AG04450 (cell line): ENCODE measurements at regions of chr15 and their contacts with region 1.

Region 1: DNA sequence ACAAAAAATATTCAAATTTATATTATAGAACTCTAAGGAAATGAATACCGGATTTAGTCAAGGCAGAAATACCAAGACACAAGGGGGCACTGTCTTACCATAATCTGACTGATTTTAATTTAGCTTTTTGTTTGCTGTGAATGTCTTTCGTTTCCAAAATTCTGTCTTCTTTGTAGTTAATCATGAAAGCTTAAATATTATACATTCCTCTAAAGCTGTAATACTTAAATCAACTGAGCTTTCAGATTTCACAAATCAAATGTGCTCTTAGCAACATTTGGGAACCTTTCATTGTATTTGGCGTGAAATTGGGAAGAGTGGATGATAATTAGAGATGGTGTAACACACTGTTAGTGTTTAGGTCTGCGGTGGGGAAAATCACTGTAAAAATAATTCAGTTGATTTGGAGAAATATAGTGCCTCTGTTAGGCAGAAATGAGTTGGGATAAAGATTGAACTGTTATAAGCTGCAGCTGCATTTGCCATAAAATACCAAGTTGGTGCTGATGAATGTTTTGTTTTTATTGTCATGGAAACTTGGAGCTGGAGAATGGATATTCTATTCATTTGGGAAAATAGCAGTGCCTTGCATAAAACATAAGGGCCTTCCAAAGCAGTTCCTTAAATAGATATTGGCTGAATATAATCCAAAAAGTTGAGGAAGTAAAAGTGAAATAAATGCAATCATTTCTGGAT is 228.2 kb downstream of the TCF12 start:
- DNase-seq: no peak
- H3K4me3 ChIP-seq: peak overlapping the region; percentile 26
- H3K27ac ChIP-seq: no peak overlapping the region
- H3K27me3 ChIP-seq: no peaks in the 10 kb centered on the region
- CTCF ChIP-seq: peak; percentile 70

Region 2: DNA sequence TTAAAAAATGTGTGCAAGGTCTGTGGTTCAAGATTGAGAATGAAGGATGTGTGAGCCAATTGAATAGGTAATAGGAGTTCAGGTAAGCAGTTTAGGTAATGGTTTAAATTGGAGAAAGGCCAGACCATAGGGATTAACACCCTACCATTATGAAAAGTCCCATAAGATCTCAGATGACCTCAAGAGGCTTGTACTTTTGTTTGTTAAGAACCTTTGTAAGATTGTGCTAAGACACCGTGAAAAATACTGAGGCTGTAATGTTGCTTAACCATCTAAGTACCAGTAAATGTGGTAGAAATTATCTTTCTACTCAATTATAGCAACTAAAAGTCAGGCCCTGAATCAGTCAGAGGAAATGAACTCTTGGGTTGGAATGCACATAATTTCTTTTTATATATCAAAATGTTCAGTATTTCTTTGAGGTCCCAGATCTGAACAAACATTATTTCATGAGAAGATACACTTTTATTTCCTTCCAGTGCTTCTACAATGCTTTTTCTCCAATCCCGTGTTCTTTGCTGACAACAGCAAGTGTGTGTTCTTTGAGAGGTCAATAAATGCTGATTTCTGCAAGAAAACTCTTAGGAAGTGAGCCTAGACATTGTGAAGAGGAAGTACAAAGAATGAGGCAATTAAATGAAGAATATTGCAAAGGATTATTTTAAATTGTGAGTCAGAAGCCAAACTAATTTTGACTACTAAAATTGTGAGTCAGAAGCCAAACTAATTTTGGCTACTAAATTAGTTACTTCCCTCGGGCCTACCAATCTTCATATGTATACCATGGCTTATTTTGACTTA is 161.8 kb before region 1 on chr15:
- CTCF ChIA-PET with region 1: no interaction called
- POLR2A ChIA-PET with region 1: no interaction called
- DNase-seq: no peak
- H3K4me3 ChIP-seq: no peak overlapping the region
- H3K27ac ChIP-seq: no peak overlapping the region
- H3K27me3 ChIP-seq: no peaks in the 10 kb centered on the region
- CTCF ChIP-seq: no peak

Region 3: GRCh38 chr15:57041416-57041815 is 105.2 kb before region 1 on chr15:
- CTCF ChIA-PET with region 1: no interaction called
- POLR2A ChIA-PET with region 1: no interaction called
- DNase-seq: no peak
- H3K4me3 ChIP-seq: no peak overlapping the region
- H3K27ac ChIP-seq: no peak overlapping the region
- H3K27me3 ChIP-seq: no peaks in the 10 kb centered on the region
- CTCF ChIP-seq: no peak

Region 4: GRCh38 chr15:57102858-57103257 is 43.8 kb before region 1 on chr15:
- CTCF ChIA-PET with region 1: no interaction called
- POLR2A ChIA-PET with region 1: no interaction called
- DNase-seq: no peak
- H3K4me3 ChIP-seq: no peak overlapping the region
- H3K27ac ChIP-seq: no peak overlapping the region
- H3K27me3 ChIP-seq: no peaks in the 10 kb centered on the region
- CTCF ChIP-seq: no peak

Region 5: GRCh38 chr15:57213862-57214261 is 67.2 kb after region 1 on chr15:
- CTCF ChIA-PET with region 1: interaction called, 87 read pairs
- POLR2A ChIA-PET with region 1: no interaction called
- DNase-seq: no peak
- H3K4me3 ChIP-seq: no peak overlapping the region
- H3K27ac ChIP-seq: no peak overlapping the region
- H3K27me3 ChIP-seq: no peaks in the 10 kb centered on the region
- CTCF ChIP-seq: peak; percentile 56

Region 6: DNA sequence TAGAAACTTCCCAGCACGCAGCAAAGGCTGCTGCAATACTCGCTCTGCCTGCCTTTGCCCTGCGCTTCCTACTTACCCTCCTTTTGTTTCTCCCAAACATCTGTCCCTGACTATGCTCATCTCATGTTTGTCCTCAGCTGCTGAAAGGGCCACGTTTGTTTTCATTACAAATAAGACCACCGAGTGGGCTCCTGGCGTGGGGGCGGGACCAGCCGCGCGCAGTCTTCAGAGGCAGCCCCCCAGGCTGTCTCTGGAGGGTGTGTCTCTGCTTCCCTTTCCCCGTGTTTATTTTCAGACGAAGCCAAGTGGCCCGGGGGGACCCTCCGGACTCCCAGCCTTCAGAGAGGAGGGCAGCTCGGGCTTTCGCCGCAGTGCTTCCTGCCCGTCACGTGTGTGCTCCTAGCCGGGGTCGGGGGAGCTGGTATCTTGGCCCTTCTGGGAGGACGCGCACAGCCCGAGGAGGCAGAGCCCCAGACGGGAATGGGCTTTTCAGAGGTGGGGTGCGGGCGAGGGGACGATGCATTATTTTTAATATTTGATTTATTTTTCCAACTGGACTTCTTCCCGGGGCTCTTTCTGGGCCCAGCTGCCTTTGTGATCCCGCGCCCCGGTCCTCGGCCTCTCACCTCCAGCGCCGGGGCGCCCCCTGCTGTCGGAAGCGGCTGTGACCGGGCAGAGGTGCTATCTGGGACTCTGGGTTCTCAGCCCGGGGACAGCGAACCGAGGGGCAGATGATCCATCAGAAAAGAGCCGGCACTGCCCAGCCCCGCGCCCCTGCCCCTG is 159.7 kb after region 1 on chr15:
- CTCF ChIA-PET with region 1: interaction called, 76 read pairs
- POLR2A ChIA-PET with region 1: interaction called, 3 read pairs
- DNase-seq: no peak
- H3K4me3 ChIP-seq: peak overlapping the region; percentile 47
- H3K27ac ChIP-seq: peak overlapping the region; percentile 21
- H3K27me3 ChIP-seq: no peaks in the 10 kb centered on the region
- CTCF ChIP-seq: peak; percentile 79

Region 7: DNA sequence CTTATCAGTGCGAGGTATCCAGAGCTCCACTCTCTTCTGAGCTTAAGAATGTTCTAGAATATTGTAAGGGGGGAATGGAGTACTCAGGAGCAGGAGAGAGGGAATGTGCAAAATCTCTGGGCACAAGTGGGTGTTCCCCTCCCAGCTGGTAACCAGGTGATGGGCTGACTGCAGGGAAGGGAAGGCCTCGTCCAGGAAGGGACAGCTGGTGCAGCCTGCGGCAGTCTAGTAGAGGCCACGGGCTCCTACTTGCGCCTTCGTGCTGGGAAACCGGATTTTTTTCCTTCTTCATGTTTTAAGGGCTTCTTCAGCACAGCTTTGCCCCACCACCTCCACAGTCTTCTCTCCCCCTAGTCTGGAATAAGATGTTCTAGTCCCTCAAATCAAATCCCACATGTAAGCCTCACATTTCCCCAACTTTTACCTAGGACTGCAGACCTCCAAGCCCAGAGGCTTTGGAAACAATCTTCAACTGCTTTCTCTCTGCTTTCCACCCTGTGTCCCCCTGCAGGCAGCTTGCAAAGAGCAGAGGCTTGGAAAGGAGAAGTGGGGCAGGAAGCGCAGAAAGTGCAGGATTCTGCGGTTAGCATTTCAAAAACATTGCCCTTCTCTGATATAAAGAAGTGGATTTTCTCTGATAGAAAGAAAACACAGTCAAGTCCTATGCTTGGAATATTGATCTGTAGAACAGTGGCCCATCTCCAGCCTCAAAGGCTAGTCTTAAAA is 217.8 kb after region 1 on chr15:
- CTCF ChIA-PET with region 1: no interaction called
- POLR2A ChIA-PET with region 1: no interaction called
- DNase-seq: no peak
- H3K4me3 ChIP-seq: no peak overlapping the region
- H3K27ac ChIP-seq: no peak overlapping the region
- H3K27me3 ChIP-seq: no peaks in the 10 kb centered on the region
- CTCF ChIP-seq: peak; percentile 51